PC-9 (cell line): ENCODE measurements at regions of chr17 and their contacts with region 1.

Region 1: DNA sequence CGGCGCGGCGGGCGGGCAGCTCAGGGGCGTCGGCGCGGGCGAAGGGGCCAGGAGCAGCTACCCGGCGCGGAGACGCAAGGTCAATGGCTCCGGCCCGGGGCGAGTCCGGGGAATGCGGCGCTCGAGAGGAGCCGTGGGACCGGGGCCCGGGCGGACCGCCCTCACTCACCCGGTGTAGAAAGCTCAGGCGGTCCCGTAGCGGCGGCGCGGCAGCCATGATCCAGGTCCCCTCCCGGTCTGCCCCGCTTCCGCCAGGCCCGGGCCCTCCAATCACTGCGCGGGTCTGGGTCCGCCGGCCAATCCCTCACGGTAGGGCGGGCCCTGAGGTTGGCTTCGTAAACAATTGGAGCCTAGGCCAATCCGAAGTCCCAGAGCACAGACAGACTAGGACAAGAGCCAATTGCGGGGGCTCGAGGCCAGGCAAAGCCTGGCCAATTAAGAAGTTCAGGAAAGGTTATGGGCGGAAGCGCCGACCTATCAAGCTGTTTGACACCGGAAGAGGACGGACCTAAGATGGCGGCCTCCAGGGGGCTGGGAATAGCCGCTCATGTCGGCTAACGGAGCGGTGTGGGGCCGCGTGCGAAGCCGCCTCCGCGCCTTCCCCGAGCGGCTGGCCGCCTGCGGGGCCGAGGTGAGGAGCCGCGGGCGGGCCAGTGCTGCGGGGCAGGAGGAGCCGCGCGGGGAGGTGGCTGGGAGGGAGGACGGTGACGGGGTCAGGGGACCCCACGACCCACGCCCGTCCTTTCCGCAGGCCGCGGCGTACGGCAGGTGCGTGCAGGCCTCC is at the starts of genes NDUFAF8 and TEPSIN:
- DNase-seq: peak; percentile 97 to 99
- H3K4me3 ChIP-seq: peak within 1 kb of the TSS; percentile 75
- H3K27ac ChIP-seq: no peak within 1 kb of the TSS
- H3K4me1 ChIP-seq: peaks cover 6% of the 10 kb centered on the region; the same call in 1 of the 2 replicates
- H3K27me3 ChIP-seq: no peaks in the 10 kb centered on the region
- CTCF ChIP-seq: no peak
- total RNA-seq, gene NDUFAF8: 53.3 and 64.2 TPM in 2 replicates
- total RNA-seq, gene TEPSIN: 35.0 and 36.8 TPM in 2 replicates

Region 2: GRCh38 chr17:80920441-80920840 is 318.6 kb before region 1 on chr17:
- CTCF ChIA-PET with region 1: no interaction called
- POLR2A ChIA-PET with region 1: no interaction called
- intact Hi-C with region 1: loop called (anchors 5 kb)
- DNase-seq: no peak
- H3K4me3 ChIP-seq: no peak overlapping the region
- H3K27ac ChIP-seq: no peak overlapping the region
- H3K4me1 ChIP-seq: no peaks in the 10 kb centered on the region
- H3K27me3 ChIP-seq: no peaks in the 10 kb centered on the region
- CTCF ChIP-seq: no peak

Region 3: GRCh38 chr17:80991645-80992076 is 247.3 kb before region 1 on chr17 and contains the start of gene CHMP6:
- CTCF ChIA-PET with region 1: no interaction called
- POLR2A ChIA-PET with region 1: no interaction called
- intact Hi-C with region 1: loop called (anchors 1 kb)
- DNase-seq: peak; percentile 37 to 71
- H3K4me3 ChIP-seq: peak within 1 kb of the TSS; percentile 74
- H3K27ac ChIP-seq: no peak within 1 kb of the TSS
- H3K4me1 ChIP-seq: peaks cover 16% of the 10 kb centered on the region
- H3K27me3 ChIP-seq: no peaks in the 10 kb centered on the region
- CTCF ChIP-seq: peak; percentile 35; the same call in 1 of the 2 replicates
- total RNA-seq, gene CHMP6: 17.4 and 18.1 TPM in 2 replicates